Ascending aorta (tissue), 2 donors: ENCODE measurements at regions of chr9 and their contacts with region 1.

Region 1: GRCh38 chr9:107637421-107638420 is 148.2 kb upstream of the KLF4 start:
- DNase-seq: peak; percentile 80 to 98
- H3K4me3 ChIP-seq: peak overlapping the region; percentile 54 to 62
- H3K27ac ChIP-seq: peak overlapping the region; percentile 98 to 99
- H3K4me1 ChIP-seq: peaks cover 3 to 16% of the 10 kb centered on the region in 2 donors
- H3K27me3 ChIP-seq: no peaks in the 10 kb centered on the region
- CTCF ChIP-seq: peak; percentile 19 to 38 (median 23)

Region 2: DNA sequence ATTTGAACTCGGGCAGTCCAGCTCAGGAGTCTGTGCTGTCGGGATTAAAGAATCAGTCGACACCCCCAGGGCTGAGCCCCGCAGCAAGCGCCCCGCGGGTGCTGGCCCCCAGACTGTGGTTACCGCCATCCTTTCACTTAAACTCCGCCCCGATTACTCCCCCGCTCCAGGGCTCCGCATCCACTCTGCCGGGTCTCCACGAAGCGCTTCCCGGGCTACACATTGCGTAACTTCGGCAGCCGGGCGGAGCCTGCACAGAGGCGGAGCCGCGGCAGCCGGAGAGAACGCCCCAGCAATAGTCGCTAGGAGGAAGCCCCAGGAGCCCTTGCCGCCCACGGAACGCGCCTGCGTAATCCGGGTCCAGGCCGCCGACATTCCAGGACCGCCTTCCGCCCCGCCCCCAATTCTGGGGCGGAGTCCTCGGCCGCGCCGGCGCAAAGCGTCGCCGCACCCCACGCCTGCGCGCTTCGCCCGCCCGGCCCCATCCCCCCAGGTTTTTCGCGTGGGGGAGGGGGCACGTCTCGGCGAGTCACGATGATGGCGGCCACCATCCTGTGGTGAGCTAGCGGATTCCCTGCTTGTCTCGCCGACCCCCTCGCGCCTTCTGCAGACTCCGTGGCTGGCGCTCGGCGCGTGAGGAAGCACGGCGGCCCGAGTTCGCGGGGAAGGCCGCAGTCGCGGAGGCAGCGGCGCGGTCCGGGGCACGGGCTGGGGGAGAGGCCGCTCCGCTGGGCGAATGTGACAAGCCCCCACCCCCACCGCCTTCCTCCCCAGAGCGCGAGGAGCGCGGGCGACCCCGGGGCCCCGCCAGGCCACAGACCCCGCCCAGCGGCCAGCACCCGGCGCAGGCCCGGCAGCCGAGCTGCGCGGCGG is 354.7 kb before region 1 on chr9 and contains the start of gene RAD23B:
- intact Hi-C with region 1: loop called (anchors 10 kb)
- DNase-seq: peak; percentile 93 to 99
- H3K4me3 ChIP-seq: peak within 1 kb of the TSS; percentile 82 to 95
- H3K27ac ChIP-seq: peak within 1 kb of the TSS; percentile 98 to 99
- H3K4me1 ChIP-seq: peaks cover 0 to 8% of the 10 kb centered on the region in 2 donors
- H3K27me3 ChIP-seq: no peaks in the 10 kb centered on the region
- CTCF ChIP-seq: no peak
- total RNA-seq, gene RAD23B: 57.7 TPM

Region 3: DNA sequence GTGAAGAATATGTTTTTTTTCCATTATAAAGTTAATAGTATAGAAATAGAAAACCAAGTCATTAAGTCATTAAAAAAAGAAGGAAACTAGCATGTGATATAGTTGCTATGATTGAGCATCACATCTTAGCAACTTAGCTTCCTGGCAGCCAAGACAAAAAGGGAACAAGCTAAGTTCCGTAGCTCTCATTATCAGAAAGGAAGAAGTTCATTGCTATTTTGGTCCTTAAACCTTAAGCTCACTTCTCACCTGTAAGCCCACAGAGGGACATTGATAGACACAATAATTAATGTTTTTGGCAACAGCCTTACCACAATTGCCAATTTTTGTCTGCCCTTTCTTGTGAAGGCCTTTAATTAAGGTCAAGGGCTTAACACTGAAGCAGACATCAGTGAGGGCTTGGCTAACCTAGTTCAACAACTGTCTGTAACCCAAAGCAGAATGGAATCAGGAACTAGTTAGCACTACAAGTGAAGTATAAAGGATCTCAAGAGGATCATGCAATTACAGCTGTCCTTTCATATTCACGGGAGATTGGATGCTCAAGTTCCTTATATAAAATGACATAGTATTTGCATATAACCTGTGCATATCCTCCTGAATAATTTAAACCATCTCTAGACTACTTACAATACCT is 124.1 kb before region 1 on chr9:
- intact Hi-C with region 1: loop called (anchors 5 kb)
- DNase-seq: no peak
- H3K4me3 ChIP-seq: no peak overlapping the region
- H3K27ac ChIP-seq: no peak overlapping the region
- H3K4me1 ChIP-seq: no peaks in the 10 kb centered on the region
- H3K27me3 ChIP-seq: no peaks in the 10 kb centered on the region
- CTCF ChIP-seq: no peak

Region 4: GRCh38 chr9:107749787-107750444 is 112.2 kb after region 1 on chr9:
- intact Hi-C with region 1: loop called (anchors 1 kb)
- DNase-seq: peak; percentile 86 to 96
- H3K4me3 ChIP-seq: no peak overlapping the region
- H3K27ac ChIP-seq: peak overlapping the region; percentile 92 to 95
- H3K4me1 ChIP-seq: peaks cover 22 to 31% of the 10 kb centered on the region in 2 donors
- H3K27me3 ChIP-seq: no peaks in the 10 kb centered on the region
- CTCF ChIP-seq: no peak

Region 5: GRCh38 chr9:108053555-108054061 is 415.9 kb after region 1 on chr9:
- intact Hi-C with region 1: loop called (anchors 10 kb)
- DNase-seq: peak in 1 of 2 donors; percentile 79
- H3K4me3 ChIP-seq: peak overlapping the region in 1 of 2 donors; percentile 17
- H3K27ac ChIP-seq: peak overlapping the region; percentile 40 to 49
- H3K4me1 ChIP-seq: peaks cover 0 to 18% of the 10 kb centered on the region in 2 donors
- H3K27me3 ChIP-seq: no peaks in the 10 kb centered on the region
- CTCF ChIP-seq: no peak

Region 6: GRCh38 chr9:108478431-108478837 is 840.7 kb after region 1 on chr9:
- intact Hi-C with region 1: loop called (anchors 1 kb)
- DNase-seq: peak; percentile 25 to 83
- H3K4me3 ChIP-seq: peak overlapping the region in 1 of 2 donors; percentile 38
- H3K27ac ChIP-seq: peak overlapping the region; percentile 88 to 91
- H3K4me1 ChIP-seq: peaks cover 3 to 19% of the 10 kb centered on the region in 2 donors
- H3K27me3 ChIP-seq: no peaks in the 10 kb centered on the region
- CTCF ChIP-seq: no peak